CD8-positive, alpha-beta T cell (primary cell): ENCODE measurements at regions of chr12 and their contacts with region 1.

Region 1: GRCh38 chr12:67034492-67034891 is 234.7 kb upstream of the CAND1 start:
- DNase-seq: no peak
- ATAC-seq: no peak
- H3K4me3 ChIP-seq: no peak overlapping the region
- H3K4me3 Mint-ChIP-seq: no peak overlapping the region
- H3K27ac ChIP-seq: no peak overlapping the region
- H3K27ac Mint-ChIP-seq: no peak overlapping the region
- H3K4me1 ChIP-seq: no peaks in the 10 kb centered on the region
- H3K4me1 Mint-ChIP-seq: no peaks in the 10 kb centered on the region
- H3K27me3 ChIP-seq: no peaks in the 10 kb centered on the region
- H3K27me3 Mint-ChIP-seq: peaks cover 10% of the 10 kb centered on the region
- CTCF ChIP-seq: no peak

Region 2: DNA sequence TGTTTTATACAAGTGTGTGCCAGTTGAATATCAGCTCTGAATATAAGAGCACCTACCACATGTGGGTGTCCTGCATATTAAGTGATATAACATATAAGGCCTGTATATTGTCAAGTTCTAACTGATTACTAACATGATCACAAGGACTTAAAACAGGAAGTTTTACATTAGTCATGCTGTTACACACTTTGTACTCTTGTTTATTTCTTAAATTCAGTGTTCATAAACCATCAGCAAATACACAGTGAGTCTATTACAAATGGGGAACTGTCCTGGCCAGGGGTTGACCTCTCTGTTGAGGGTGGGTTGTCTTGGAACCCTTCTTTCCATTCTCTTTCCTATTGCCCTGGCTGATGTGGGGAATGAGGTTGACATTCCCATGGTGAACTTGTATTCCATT is 713.1 kb before region 1 on chr12:
- CTCF ChIA-PET with region 1: no interaction called
- POLR2A ChIA-PET with region 1: no interaction called
- intact Hi-C with region 1: no loop called
- DNase-seq: no peak
- ATAC-seq: no peak
- H3K4me3 ChIP-seq: no peak overlapping the region
- H3K4me3 Mint-ChIP-seq: no peak overlapping the region
- H3K27ac ChIP-seq: no peak overlapping the region
- H3K27ac Mint-ChIP-seq: peak overlapping the region; percentile 45
- H3K4me1 ChIP-seq: peaks cover 6% of the 10 kb centered on the region
- H3K4me1 Mint-ChIP-seq: peaks cover 57% of the 10 kb centered on the region
- H3K27me3 ChIP-seq: no peaks in the 10 kb centered on the region
- H3K27me3 Mint-ChIP-seq: no peaks in the 10 kb centered on the region
- CTCF ChIP-seq: no peak

Region 3: GRCh38 chr12:66999141-66999540 is 35.4 kb before region 1 on chr12:
- CTCF ChIA-PET with region 1: no interaction called
- POLR2A ChIA-PET with region 1: no interaction called
- intact Hi-C with region 1: loop called in 1 of 2 experiments (anchors 5 kb)
- DNase-seq: no peak
- ATAC-seq: no peak
- H3K4me3 ChIP-seq: no peak overlapping the region
- H3K4me3 Mint-ChIP-seq: no peak overlapping the region
- H3K27ac ChIP-seq: no peak overlapping the region
- H3K27ac Mint-ChIP-seq: no peak overlapping the region
- H3K4me1 ChIP-seq: no peaks in the 10 kb centered on the region
- H3K4me1 Mint-ChIP-seq: no peaks in the 10 kb centered on the region
- H3K27me3 ChIP-seq: no peaks in the 10 kb centered on the region
- H3K27me3 Mint-ChIP-seq: peaks cover 6% of the 10 kb centered on the region
- CTCF ChIP-seq: no peak

Region 4: DNA sequence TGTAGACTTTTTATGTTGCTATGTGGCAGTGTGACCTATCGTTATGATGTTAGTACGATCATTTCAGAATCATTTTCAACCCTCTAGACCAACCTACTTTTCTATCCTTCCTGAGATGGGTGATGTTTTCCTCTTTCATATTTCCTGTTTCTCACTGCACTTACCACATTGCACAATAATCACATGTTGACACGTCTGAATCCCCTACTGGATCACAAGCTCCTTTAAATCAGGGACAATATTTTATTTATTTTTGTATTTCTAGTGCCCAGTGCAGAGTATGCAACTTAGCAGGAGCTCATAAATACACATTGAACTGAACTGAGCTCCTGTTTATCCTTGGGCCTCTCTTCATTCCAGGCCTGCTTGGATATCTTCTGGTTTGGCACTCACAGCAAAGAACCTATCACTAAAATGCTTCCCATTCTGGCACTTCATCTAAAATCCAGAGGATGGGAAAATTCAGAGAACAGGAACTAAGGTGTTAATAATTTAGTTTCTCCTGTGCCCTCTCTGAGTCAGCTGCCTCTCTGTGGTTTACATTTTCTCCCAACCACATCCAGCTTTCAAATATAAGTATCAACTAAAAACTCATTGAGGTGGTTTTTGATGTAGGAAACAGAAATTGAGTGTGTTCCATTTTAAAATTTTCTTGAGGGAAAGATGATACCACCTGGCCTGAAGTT is 544.6 kb after region 1 on chr12:
- CTCF ChIA-PET with region 1: no interaction called
- POLR2A ChIA-PET with region 1: no interaction called
- intact Hi-C with region 1: no loop called
- DNase-seq: peak in 6 of 9 experiments; percentile 4 to 71 (median 28)
- ATAC-seq: peak; percentile 78
- H3K4me3 ChIP-seq: peak overlapping the region; percentile 4 to 21
- H3K4me3 Mint-ChIP-seq: peak overlapping the region; percentile 56
- H3K27ac ChIP-seq: peak overlapping the region; percentile 11 to 76
- H3K27ac Mint-ChIP-seq: peak overlapping the region; percentile 69
- H3K4me1 ChIP-seq: peaks cover 34% of the 10 kb centered on the region
- H3K4me1 Mint-ChIP-seq: peaks cover 57% of the 10 kb centered on the region
- H3K27me3 ChIP-seq: no peaks in the 10 kb centered on the region
- H3K27me3 Mint-ChIP-seq: no peaks in the 10 kb centered on the region
- CTCF ChIP-seq: no peak